Activated CD4-positive, alpha-beta memory T cell treated with anti-CD3 and anti-CD28 coated beads for 36 hours (primary cell): ENCODE measurements at regions of chr6 and their contacts with region 1.

Region 1: DNA sequence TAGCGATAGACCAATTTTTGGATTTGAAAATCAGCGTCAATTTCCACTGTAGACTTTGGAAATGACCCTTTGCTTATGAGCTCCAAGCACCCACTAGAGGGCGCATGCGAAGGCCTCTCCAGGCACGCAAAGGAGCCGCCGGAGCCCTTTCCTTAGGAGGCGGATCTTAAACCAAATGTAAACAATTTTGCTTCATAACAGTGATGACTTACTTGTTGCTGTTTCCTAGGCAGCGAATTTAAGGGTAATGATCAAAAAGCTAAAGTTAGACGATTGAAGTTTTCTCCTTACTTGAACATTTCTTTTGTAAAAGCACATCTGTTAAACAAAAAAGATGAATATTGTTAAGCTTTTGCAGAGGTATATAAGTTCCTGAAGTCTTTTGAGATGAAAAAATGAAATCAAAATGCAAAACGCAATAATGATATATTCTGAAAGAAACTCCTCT is 29.2 kb upstream of the EXOC2 start:
- DNase-seq: peak; percentile 84
- H3K4me3 Mint-ChIP-seq: no peak overlapping the region
- H3K27ac Mint-ChIP-seq: no peak overlapping the region
- H3K4me1 Mint-ChIP-seq: peaks cover 3% of the 10 kb centered on the region
- H3K27me3 Mint-ChIP-seq: peaks cover 3% of the 10 kb centered on the region

Region 2: GRCh38 chr6:683742-684440 is 38.2 kb before region 1 on chr6:
- CTCF ChIA-PET with region 1: interaction called, 13 read pairs
- POLR2A ChIA-PET with region 1: no interaction called
- intact Hi-C with region 1: no loop called
- DNase-seq: no peak
- H3K4me3 Mint-ChIP-seq: no peak overlapping the region
- H3K27ac Mint-ChIP-seq: no peak overlapping the region
- H3K4me1 Mint-ChIP-seq: peaks cover 51% of the 10 kb centered on the region
- H3K27me3 Mint-ChIP-seq: no peaks in the 10 kb centered on the region

Region 3: GRCh38 chr6:710601-711571 is 11.2 kb before region 1 on chr6:
- CTCF ChIA-PET with region 1: interaction called, 42 read pairs
- POLR2A ChIA-PET with region 1: interaction called, 6 read pairs
- intact Hi-C with region 1: no loop called
- DNase-seq: peak; percentile 69
- H3K4me3 Mint-ChIP-seq: peak overlapping the region; percentile 94
- H3K27ac Mint-ChIP-seq: peak overlapping the region; percentile 96
- H3K4me1 Mint-ChIP-seq: peaks cover 26% of the 10 kb centered on the region
- H3K27me3 Mint-ChIP-seq: peaks cover 7% of the 10 kb centered on the region

Region 4: DNA sequence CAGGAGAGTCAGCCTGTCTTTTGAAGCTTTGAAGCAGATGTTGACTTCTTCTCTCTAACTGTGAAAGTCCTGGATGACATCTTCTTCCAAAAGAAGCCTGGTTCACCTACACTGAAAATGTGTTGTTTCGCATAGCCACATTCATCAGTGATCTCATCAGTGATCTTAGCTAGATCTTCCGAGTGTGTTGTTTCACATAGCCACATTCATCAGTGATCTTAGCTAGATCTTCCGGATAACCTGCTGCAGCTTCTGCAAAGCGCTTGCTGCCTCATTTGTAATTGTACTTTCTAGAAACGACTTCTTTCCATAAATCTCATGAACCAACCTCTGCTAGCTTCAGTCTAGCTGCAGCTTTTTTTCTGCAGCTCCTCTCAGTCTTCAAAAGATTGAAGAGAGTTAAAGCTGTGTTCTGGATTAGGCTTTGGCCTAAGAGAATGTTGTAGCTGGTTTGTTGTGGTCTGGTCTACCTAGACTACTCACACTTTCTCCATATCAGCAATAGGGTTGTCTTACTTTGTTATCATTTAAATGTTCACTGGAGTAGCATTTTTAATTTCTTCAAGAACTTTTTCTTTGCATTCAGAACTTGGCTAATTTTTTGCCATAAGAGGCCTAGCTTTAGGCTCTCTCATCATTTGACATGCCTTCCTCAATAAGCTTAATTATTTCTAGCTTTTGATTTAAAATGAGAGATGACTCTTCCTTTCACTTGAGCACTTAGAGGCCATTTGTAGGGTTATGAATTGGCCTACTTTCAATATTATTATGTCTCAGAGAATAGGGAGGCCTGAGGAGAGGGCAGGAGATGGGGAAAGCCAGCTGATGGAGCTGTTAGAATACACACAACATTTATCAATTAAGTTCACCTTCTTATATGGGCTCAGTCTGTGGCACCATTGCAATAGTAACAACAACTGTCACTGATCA is 19.6 kb after region 1 on chr6:
- CTCF ChIA-PET with region 1: interaction called, 12 read pairs
- POLR2A ChIA-PET with region 1: no interaction called
- intact Hi-C with region 1: no loop called
- DNase-seq: peak; percentile 12
- H3K4me3 Mint-ChIP-seq: no peak overlapping the region
- H3K27ac Mint-ChIP-seq: peak overlapping the region; percentile 64
- H3K4me1 Mint-ChIP-seq: peaks cover 7% of the 10 kb centered on the region
- H3K27me3 Mint-ChIP-seq: peaks cover 7% of the 10 kb centered on the region

Region 5: DNA sequence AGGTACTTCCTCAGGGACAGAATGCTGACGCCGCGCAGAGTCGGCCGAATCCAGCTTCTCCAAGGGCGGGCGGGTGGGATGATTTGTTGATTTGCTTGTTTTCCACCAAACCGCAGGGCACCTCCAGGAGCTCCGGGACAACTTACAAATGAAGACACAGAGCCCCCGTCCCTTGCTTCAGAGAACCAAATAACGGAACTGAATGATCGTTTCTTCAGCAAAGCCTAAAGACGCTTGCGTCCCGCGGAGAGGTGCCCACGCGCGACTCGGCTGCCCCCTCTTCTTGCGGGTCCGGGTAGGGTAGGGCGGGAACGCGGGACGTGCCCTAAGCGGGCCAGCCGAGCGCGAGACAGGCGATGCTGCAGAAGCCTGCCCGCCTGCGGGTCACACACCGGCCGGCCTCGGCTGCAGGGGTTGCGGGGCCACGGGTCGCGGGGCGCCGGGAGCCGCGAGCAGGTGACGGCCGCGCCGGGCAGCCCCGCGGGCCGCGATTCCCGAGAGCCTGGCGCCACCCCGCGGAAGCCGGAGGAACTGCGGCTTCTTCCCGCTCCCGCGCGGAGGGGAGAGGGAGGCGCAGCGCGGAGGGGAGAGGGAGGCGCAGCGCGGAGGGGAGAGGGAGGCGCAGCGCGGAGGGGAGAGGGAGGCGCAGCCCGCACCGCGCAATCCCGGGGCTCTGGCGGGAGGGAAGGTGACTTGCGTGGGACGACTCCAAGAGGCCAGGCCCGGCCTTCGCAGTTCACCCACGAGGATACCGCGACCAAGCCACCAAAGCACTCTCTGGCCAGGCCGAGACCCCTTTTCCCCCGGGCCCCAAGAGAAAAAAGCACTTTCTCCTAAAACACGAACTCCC is 659.6 kb after region 1 on chr6:
- CTCF ChIA-PET with region 1: interaction called, 10 read pairs
- POLR2A ChIA-PET with region 1: no interaction called
- intact Hi-C with region 1: no loop called
- DNase-seq: peak; percentile 72
- H3K4me3 Mint-ChIP-seq: no peak overlapping the region
- H3K27ac Mint-ChIP-seq: no peak overlapping the region
- H3K4me1 Mint-ChIP-seq: peaks cover 31% of the 10 kb centered on the region
- H3K27me3 Mint-ChIP-seq: peaks cover 70% of the 10 kb centered on the region